Naive thymus-derived CD8-positive, alpha-beta T cell (primary cell): ENCODE measurements at regions of chr17 and their contacts with region 1.

Region 1: DNA sequence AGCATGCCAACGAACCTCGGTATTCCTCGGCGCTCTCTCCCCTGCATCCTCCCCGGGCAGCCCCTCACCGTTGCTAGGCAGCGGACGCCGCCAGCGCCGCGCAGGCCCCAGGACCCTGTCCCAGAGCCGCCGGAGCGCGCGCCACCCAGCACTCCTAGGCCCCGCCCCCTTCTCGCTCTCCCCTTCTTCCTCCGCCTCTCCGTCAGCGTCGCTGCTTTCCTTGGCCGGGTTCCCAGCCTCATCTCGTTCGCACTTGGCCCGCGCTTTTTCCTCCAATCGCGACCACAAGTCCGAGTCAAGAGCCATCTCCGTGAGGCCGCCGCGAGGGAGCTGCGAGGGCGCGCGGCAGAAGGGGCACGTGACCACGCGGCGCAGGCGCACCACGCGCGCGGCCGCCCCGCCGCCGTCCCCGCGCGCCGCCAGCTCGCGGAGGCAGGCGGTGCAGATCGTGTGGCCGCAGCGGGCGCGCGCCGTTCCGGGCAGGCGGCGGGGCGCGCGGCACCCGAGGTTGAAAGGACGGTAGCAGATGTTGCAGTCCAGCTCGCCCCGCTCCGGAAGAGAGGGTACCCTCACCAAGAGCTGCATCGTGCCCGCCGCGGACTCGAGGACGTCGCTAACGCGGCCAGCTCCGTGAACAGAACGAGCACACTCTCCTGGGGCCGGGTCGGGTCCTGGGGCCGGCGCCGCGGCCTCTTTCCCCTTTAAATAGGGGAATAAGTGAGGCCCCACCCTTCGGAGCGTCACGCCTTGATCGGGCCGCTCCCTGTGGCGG is at the start of gene RNF227:
- DNase-seq: peak; percentile 61 to 91 (median 80)
- ATAC-seq: peak; percentile 79 to 83
- H3K4me3 Mint-ChIP-seq: peak within 1 kb of the TSS; percentile 86 to 93 (median 90)
- H3K27ac Mint-ChIP-seq: peak within 1 kb of the TSS; percentile 86 to 96 (median 94)
- H3K4me1 Mint-ChIP-seq: peaks cover 26 to 42% (median 32%) of the 10 kb centered on the region in 4 donors
- H3K27me3 Mint-ChIP-seq: no peaks in the 10 kb centered on the region
- polyA plus RNA-seq, gene RNF227: 0.65 to 4.8 (median 2.4) TPM

Region 2: DNA sequence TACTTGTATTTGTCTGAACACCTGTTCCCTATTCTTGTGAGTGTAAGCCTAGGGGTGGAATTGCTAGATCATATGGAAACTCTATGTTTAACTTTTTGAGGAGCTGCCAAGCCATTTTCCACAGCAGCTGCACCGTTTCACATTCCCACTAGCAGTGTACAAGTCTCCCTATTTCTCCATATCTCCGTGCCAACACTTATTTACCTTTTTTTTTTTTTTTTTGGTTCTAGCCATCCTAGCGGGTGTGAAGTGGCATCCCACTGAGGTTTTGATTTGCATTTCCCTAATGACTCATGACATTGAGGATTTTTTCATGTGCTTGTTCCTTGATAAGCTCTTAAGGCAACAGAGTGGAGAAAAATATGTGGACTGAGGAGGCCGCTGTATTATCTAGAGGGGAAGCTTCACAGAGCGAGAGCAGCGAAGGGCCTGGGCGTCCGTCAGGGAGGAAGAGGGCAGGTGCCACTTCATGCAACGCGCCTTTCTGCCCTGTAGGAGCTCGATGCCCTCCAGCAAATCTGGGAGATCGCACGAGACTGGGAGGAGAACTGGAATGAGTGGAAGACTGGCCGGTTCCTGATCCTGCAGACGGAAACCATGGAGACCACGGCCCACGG is 148.3 kb before region 1 on chr17:
- POLR2A ChIA-PET with region 1: no interaction called
- DNase-seq: no peak
- ATAC-seq: no peak
- H3K4me3 Mint-ChIP-seq: no peak overlapping the region
- H3K27ac Mint-ChIP-seq: no peak overlapping the region
- H3K4me1 Mint-ChIP-seq: no peaks in the 10 kb centered on the region
- H3K27me3 Mint-ChIP-seq: peaks cover 3 to 22% (median 8%) of the 10 kb centered on the region in 5 donors

Region 3: GRCh38 chr17:7885367-7886226 is 30.2 kb before region 1 on chr17:
- POLR2A ChIA-PET with region 1: interaction called, 12 read pairs
- DNase-seq: peak in 6 of 10 donors; percentile 14 to 49 (median 42)
- ATAC-seq: peak in 1 of 2 donors; percentile 5
- H3K4me3 Mint-ChIP-seq: peak overlapping the region in 2 of 10 donors; percentile 43 to 76
- H3K27ac Mint-ChIP-seq: no peak overlapping the region
- H3K4me1 Mint-ChIP-seq: peaks cover 5 to 10% (median 6%) of the 10 kb centered on the region in 4 donors
- H3K27me3 Mint-ChIP-seq: no peaks in the 10 kb centered on the region

Region 4: DNA sequence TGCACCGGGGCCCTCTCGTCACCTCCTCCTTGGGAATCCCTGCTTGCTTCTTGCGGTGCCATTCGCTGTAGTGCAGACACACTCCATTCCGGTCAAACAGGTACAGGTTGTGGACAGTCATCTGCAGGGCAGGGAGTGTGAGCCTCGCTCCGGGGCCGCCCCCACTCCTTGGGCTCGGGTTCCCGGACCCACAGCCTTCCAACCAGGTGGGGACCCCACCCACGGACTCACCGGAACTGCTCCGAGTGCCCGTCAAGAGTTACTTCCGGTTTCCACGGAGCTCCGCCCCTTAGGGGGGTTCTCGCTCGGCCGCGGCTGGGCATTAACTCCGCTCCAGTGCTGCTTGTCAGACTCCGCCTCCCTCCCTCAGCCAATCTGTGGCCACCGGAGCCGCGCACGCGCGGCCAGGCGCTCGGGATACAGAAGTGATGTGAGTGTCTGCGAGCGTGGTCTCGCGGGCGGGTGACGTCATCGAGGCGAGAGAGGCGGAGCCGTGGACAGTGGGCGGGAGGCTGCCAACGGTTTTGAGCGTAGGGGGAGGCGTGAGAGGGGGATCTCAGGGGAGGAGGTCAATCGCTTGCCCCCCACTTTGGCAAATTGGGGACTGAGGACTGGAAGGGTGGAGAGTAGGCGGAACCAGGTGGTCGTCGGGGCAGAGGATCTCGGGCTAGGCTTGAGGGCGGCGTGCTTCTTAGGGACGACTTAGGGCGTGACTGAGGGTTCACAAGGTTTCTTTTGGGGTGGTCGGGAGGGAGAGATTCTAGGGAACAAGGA is 16.1 kb after region 1 on chr17 and contains the starts of genes CNTROB and TRAPPC1:
- POLR2A ChIA-PET with region 1: interaction called, 110 read pairs
- DNase-seq: peak; percentile 97 to 100 (median 99)
- ATAC-seq: peak; percentile 96 to 97
- H3K4me3 Mint-ChIP-seq: peak within 1 kb of the TSS; percentile 87 to 100 (median 98)
- H3K27ac Mint-ChIP-seq: peak within 1 kb of the TSS; percentile 91 to 99 (median 97)
- H3K4me1 Mint-ChIP-seq: peaks cover 28 to 56% (median 51%) of the 10 kb centered on the region in 4 donors
- H3K27me3 Mint-ChIP-seq: no peaks in the 10 kb centered on the region
- polyA plus RNA-seq, gene CNTROB: 7.6 to 18.5 (median 12.4) TPM
- polyA plus RNA-seq, gene TRAPPC1: 199 to 219 (median 205) TPM